Activated T-helper 1 cell treated with anti-CD3 and anti-CD28 coated beads, Interleukin-12 subunit alpha, Interleukin-12 subunit beta, Interleukin-2, Interleukin-4 antibody, amounts not matched to agents 30 ng/mL and 10 ng/mL and 1 ng/mL, durations not matched to agents 14 hours and 24 hours and 36 hours (primary cell): ENCODE measurements at regions of chr6 and their contacts with region 1.

Region 1: GRCh38 chr6:36912586-36912985 is 26.8 kb downstream of the C6orf89 start:
- DNase-seq: peak; percentile 72
- H3K4me3 Mint-ChIP-seq: peak overlapping the region; percentile 79
- H3K27ac Mint-ChIP-seq: peak overlapping the region; percentile 94
- H3K4me1 Mint-ChIP-seq: peaks cover 57% of the 10 kb centered on the region
- H3K27me3 Mint-ChIP-seq: no peaks in the 10 kb centered on the region

Region 2: DNA sequence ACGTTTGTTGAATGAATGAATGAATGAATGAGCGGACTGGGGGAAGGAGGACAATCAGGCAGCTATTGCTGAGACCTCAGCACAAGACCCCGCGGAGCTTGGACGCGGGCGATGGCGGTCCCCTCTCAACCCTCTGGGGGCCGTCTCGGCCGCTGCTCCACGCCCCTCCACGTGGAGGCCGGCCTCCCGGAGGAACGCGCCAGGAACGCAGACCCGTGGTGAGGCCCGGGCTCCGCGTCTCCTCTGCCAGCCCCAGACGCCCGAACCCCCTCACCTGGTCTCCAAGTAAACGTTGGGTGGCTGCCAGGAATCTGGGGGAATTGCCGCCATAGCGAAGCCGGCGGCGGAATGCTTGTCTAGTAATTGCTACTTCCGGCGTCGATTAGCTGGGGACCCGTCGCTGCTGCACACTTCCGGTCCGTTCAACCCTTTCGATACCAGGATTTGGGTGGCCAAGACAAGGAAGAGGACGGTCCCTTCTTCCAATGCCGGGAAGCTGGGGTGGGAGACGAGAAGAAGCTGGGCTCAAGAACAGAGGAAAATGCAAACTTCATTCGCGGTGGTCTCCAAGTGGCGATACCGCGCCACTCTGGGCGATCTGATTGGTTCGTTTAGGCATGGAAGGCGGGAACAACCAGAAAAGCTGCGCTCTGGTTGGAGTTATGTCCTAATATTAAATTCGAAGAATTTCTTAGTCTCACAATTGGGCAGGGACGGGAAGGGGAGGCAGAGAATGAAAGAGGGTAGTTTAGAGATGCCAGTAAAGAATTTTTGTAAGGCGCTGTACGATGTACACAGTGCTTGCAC is 37.9 kb before region 1 on chr6 and contains the start of gene PPIL1:
- intact Hi-C with region 1: loop called (anchors 1 kb)
- DNase-seq: peak; percentile 75
- H3K4me3 Mint-ChIP-seq: peak within 1 kb of the TSS; percentile 93
- H3K27ac Mint-ChIP-seq: peak within 1 kb of the TSS; percentile 99
- H3K4me1 Mint-ChIP-seq: peaks cover 47% of the 10 kb centered on the region
- H3K27me3 Mint-ChIP-seq: peaks cover 2% of the 10 kb centered on the region
- total RNA-seq, gene PPIL1: 60.2 and 62.6 TPM in 2 replicates

Region 3: DNA sequence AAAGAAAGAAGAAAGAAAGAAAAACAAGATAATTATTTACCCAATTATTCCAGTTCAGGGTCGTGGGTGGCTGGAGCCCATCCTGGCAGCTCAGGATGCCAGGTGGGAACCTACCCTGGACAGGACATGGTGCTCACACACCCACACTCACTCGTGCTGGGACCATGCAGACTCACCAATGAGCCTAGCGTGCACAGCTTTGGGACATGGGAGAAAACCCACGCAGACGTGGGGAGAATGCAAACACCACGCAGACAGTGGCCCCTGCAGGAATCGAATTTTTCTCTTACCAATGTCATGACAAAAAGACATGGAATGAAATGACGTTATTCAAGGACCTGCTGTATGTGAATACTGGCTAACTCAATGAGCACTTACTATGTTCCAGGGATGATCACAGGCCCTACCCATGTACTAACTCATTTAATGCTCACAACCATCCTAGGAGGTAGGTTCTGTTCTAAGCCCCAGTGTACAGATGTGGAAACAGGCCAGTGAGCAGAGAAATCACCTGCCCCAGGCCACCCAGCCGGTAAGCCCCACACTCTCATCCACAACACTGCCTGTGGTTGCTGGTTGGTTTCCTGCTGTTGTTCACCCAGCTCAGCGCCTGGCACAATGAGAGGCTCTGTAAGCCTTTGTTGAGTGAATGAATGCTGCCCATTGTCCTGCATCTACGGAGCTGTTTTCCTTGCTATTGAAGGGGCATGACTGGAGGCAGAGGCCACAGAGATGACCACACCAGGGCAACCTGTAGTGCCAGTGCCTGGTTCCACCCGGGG is 35.2 kb after region 1 on chr6:
- intact Hi-C with region 1: no loop called
- DNase-seq: peak; percentile 34
- H3K4me3 Mint-ChIP-seq: no peak overlapping the region
- H3K27ac Mint-ChIP-seq: peak overlapping the region; percentile 8
- H3K4me1 Mint-ChIP-seq: peaks cover 30% of the 10 kb centered on the region
- H3K27me3 Mint-ChIP-seq: peaks cover 8% of the 10 kb centered on the region

Region 4: DNA sequence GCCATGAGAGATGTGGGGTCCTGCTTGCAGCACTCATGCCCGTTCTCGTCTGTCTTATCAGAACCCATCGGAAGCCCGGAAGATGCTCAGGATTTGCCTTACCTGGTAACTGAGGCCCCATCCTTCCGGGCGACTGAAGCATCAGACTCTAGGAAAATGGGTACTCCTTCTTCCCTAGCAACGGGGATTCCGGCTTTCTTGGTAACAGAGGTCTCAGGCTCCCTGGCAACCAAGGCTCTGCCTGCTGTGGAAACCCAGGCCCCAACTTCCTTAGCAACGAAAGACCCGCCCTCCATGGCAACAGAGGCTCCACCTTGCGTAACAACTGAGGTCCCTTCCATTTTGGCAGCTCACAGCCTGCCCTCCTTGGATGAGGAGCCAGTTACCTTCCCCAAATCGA is 50.3 kb after region 1 on chr6:
- intact Hi-C with region 1: loop called (anchors 1 kb)
- DNase-seq: peak; percentile 83
- H3K4me3 Mint-ChIP-seq: peak overlapping the region; percentile 38
- H3K27ac Mint-ChIP-seq: peak overlapping the region; percentile 86
- H3K4me1 Mint-ChIP-seq: peaks cover 38% of the 10 kb centered on the region
- H3K27me3 Mint-ChIP-seq: no peaks in the 10 kb centered on the region

Region 5: DNA sequence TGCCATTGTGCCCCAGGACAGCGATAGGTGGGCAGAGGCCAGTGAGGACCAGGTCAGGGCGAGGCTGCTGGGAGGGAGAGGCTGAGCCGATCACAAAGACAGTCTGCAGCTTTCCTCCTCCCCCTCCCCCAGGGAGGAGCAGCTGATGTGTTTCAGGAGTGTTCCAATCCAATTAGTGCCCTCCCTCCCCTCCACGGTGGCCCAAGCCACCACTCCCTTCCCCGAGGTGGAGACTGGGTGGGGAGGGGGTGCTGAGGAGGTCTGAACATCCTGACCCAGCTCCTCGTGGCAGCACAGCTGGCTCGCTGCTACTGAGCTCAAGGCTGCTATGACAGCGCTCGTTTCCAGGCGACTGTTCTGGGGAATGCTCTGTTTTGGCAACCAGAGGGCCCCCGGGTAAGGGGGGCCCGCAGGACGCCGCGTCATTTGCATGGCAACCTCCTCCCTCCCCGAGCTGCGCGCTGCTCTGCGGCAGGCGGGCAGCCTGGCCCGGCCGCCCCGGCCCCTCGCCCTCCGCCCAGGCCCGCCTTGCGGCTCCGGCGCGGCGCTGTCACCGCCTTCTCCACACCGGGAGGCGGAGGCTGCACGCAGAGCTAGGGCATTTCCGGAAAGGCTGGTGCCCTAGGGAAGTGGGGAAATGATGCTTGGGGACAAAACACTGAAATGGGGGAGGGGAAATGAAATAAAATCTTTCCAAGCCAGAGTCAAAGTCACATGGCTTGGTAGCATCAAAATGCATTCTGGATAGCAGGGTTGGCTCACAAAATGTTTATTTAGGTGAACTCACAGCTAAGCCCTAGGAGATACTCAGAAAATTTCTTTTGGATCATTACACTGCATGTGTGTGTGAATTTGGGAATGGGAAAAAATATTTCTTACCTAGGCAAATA is 189.9 kb after region 1 on chr6:
- intact Hi-C with region 1: loop called (anchors 5 kb)
- DNase-seq: peak; percentile 70
- H3K4me3 Mint-ChIP-seq: peak overlapping the region; percentile 56
- H3K27ac Mint-ChIP-seq: peak overlapping the region; percentile 85
- H3K4me1 Mint-ChIP-seq: peaks cover 58% of the 10 kb centered on the region
- H3K27me3 Mint-ChIP-seq: no peaks in the 10 kb centered on the region

Region 6: GRCh38 chr6:37289931-37290330 is 377.3 kb after region 1 on chr6:
- intact Hi-C with region 1: loop called (anchors 1 kb)
- DNase-seq: peak; percentile 54
- H3K4me3 Mint-ChIP-seq: peak overlapping the region; percentile 55
- H3K27ac Mint-ChIP-seq: peak overlapping the region; percentile 89
- H3K4me1 Mint-ChIP-seq: peaks cover 49% of the 10 kb centered on the region
- H3K27me3 Mint-ChIP-seq: no peaks in the 10 kb centered on the region